Ascending aorta (tissue), 2 donors: ENCODE measurements at regions of chr5 and their contacts with region 1.

Region 1: DNA sequence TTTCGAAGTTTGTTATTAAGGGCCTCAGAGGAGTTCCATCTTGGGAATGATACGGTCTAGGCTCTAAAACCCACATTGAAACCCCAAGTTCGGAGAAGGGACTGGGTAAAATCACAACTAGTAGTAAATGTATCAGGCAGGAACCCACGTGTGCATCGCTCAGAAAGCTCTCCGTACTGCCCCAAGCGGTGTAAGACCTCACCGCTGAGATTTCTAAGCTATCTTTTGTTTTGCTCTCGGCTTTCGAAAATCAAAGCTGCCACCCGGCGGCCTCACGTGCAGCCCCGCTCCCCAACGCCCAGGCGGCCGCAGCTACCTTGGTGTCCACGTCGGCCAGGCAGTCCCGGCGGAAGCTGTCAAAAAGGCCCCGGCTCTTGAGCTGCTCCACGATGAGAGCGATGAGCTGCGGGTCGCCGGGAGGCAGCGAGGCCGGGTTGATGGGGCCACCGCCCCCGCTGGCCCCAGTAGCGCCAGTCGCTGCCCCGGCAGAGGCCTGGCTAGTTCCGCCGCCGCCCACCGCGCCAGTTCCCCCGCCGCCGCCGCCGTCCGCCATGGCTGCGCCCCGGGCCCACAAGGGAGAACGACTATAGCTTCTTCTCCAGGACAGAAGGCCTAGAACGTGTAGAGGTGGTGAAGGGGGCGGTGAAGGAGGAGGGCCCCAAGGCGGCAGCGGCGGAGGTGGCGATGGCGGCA is 420 bp downstream of the BOD1 start:
- DNase-seq: peak in 1 of 2 donors; percentile 77
- H3K4me3 ChIP-seq: peak overlapping the region; percentile 70 to 79
- H3K27ac ChIP-seq: peak overlapping the region; percentile 90 to 92
- H3K4me1 ChIP-seq: peaks cover 9 to 17% of the 10 kb centered on the region in 2 donors
- H3K27me3 ChIP-seq: no peaks in the 10 kb centered on the region
- CTCF ChIP-seq: peak; percentile 47 to 72 (median 67)

Region 2: DNA sequence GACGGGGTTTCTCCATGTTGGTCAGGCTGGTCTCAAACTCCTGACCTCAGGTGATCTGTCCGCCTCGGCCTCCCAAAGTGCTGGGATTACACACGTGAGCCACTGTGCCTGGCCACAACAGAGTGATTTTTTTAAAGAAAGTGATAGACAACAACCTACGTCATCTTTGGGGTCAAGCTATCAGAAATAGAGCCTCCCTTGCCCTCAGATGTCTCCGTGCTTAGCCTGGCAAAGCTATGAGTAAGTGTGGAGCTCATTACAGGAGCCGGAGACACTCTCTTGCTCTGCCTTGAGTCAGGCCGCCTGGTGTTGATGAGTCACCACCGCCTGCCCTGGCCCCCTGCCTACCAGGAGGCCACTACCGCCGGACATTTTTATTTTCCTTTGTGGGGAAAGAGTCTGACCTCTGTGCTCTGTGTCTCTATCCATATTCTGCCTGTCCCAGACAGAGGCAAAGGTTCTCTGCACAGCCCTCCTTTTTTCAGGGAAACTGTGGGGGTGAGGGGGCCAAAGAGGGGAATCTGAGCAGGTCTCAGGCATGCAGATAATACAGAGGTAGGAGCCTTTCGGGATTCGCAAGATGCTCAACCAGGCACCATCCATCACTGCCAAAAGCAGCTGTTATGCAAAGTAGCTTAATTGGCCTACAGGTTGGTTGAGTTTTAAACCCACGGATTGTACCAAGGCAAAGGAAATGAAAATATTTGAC is 148.4 kb after region 1 on chr5:
- intact Hi-C with region 1: loop called (anchors 5 kb)
- DNase-seq: peak; percentile 70 to 90
- H3K4me3 ChIP-seq: no peak overlapping the region
- H3K27ac ChIP-seq: peak overlapping the region; percentile 27 to 64
- H3K4me1 ChIP-seq: peaks cover 0 to 5% of the 10 kb centered on the region in 2 donors
- H3K27me3 ChIP-seq: no peaks in the 10 kb centered on the region
- CTCF ChIP-seq: no peak

Region 3: DNA sequence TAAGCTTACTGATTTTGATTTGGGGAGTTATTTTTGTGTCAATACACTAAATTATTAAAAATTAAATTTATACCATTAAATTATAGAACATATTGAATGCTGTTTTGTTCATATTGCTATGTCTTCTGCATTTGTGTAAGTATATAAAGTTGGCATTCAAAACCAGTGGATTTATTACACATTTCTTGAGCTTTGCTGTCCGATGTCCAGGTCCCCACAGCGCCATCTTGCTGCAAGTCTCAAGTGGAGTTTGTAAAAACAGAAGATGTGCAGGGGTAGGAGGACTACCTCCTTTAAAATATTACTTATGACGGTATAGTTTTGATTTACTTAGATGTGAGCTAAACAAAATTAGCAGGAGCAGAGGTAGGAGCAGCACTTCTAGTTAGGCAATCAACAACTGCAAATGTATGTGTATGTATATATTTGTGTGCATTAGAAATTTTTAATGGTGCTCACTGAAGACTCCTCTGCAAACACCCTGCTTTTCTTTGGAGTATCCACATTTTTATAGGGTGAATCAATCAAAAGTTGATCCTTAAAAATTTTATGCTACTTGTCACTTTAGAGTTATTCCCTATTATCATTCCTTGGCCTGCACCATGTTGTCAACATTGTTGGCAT is 309.5 kb after region 1 on chr5:
- intact Hi-C with region 1: loop called (anchors 5 kb)
- DNase-seq: no peak
- H3K4me3 ChIP-seq: no peak overlapping the region
- H3K27ac ChIP-seq: peak overlapping the region; percentile 71 to 81
- H3K4me1 ChIP-seq: peaks cover 11 to 59% of the 10 kb centered on the region in 2 donors
- H3K27me3 ChIP-seq: no peaks in the 10 kb centered on the region
- CTCF ChIP-seq: peak in 2 of 3 experiments; percentile 19 to 29

Region 4: GRCh38 chr5:173972925-173973615 is 357.0 kb after region 1 on chr5:
- intact Hi-C with region 1: loop called (anchors 1 kb)
- DNase-seq: peak in 1 of 2 donors; percentile 92
- H3K4me3 ChIP-seq: peak overlapping the region; percentile 65 to 68
- H3K27ac ChIP-seq: no peak overlapping the region
- H3K4me1 ChIP-seq: peaks cover 4 to 10% of the 10 kb centered on the region in 2 donors
- H3K27me3 ChIP-seq: no peaks in the 10 kb centered on the region
- CTCF ChIP-seq: peak; percentile 86 to 90 (median 90)

Region 5: DNA sequence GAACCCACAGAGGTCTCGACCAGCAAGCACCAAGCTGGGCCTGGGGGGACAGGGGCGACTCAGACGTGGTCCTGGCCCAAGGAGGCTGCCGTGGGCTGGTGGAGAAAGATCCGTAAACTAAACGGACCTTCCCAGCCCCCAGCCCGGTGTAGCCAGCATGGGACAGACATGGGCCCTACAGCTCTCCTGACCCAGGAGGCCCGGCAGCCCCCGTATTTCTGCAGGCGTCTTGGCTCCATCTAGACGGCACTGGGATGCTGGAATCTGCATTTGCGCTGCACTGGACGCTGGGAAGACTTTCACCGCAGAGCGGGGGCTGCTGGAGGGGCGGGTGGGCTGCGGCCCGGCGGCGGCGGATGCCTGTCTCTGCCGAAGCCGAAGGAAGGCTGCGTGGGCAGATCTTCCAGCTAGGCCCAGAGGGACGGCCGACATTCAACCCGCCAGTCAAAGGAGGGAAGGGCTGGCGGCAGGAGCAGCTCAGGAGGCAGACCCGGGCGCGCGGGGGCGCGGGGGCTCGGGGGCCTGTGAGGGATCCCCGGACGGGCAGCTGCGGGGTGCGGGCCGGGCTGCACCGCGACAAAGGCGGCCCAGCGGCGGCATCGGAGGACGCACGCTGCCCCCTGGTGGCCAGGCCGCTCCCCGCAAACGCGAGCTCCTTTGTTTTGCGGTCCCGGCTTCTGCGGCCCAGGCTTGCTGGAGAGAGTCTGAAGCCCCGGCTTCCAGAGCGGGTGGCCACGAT is 695.7 kb after region 1 on chr5:
- intact Hi-C with region 1: loop called (anchors 5 kb)
- DNase-seq: peak in 1 of 2 donors; percentile 69
- H3K4me3 ChIP-seq: peak overlapping the region; percentile 65 to 70
- H3K27ac ChIP-seq: no peak overlapping the region
- H3K4me1 ChIP-seq: peaks cover 0 to 4% of the 10 kb centered on the region in 2 donors
- H3K27me3 ChIP-seq: no peaks in the 10 kb centered on the region
- CTCF ChIP-seq: peak; percentile 63 to 77 (median 71)

Region 6: DNA sequence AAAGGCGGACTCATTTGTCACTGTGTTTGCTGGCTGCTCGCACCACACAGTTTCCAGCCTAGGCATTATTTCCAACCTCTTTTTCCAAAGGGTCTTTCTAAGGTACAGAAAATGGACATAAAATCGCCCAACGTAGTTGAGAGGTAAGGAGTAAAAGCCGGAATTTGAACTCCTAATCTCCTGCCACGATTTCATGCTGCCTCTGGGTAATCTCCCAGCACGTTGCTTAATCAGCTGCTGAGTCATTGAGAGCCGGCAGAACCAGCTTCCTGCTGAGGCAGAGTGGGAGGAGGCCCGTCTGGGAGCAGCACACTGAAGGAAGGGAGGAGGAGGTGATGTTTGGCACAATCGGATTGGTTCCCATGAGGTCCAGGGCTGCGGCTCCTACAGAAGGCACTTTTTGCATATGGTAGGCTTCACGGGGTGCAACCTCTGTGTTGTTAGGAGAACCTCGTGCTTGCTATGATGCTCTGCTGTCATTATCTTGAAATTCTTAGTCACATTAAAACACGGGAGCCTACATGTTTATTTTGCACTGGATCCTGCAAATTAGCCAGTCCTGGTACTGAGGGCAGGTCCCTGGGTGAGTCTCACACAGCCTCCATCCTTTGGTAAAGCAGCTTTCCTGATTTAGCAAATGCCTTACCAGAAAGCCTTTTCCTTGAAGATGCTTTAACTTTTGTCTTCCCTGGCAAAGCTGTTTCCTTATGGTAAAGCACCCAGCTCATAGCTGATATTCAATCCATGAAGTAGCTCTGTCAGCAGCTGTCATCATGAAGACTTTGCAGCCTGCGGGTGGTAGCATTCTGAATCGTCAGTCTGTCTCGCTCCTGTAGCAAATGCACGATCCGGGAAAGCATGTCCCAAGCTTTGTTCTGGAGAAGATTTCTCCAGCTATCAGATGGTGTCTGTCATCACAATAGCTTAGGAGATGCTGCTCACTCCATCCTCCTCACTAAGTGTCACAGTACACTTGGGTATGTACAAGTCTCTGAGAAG is 916.7 kb after region 1 on chr5:
- intact Hi-C with region 1: loop called (anchors 5 kb)
- DNase-seq: peak; percentile 64 to 93
- H3K4me3 ChIP-seq: no peak overlapping the region
- H3K27ac ChIP-seq: peak overlapping the region; percentile 34 to 64
- H3K4me1 ChIP-seq: peaks cover 12 to 16% of the 10 kb centered on the region in 2 donors
- H3K27me3 ChIP-seq: no peaks in the 10 kb centered on the region
- CTCF ChIP-seq: no peak